ENCODE measurements at regions of chr6 and their contacts with region 1.

Region 1: DNA sequence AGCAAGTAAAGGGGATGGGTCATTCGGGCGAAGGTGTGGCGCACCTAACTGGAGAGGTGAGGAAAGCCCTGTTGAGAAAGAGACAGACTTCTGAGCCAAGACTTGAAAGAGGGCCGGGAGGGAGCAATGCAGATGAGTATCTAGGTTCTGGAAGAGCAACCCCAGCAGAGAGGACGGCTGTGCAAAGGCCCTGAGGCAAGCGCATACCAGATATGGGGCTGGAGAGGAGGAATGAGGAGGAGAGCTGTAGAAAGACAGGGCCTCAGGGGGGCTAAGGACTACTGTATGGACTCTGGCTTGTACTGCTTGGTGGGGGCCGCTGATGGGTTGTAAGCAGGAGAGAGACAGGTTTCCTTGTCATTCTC is 21.9 kb downstream of the TRERF1 start:
- DNase-seq: no peak

Region 2: GRCh38 chr6:42104095-42104806 is 325.6 kb before region 1 on chr6:
- intact Hi-C with region 1: no loop called
- DNase-seq: peak; percentile 91

Region 3: GRCh38 chr6:42387336-42387735 is 42.5 kb before region 1 on chr6:
- intact Hi-C with region 1: no loop called
- DNase-seq: no peak

Region 4: DNA sequence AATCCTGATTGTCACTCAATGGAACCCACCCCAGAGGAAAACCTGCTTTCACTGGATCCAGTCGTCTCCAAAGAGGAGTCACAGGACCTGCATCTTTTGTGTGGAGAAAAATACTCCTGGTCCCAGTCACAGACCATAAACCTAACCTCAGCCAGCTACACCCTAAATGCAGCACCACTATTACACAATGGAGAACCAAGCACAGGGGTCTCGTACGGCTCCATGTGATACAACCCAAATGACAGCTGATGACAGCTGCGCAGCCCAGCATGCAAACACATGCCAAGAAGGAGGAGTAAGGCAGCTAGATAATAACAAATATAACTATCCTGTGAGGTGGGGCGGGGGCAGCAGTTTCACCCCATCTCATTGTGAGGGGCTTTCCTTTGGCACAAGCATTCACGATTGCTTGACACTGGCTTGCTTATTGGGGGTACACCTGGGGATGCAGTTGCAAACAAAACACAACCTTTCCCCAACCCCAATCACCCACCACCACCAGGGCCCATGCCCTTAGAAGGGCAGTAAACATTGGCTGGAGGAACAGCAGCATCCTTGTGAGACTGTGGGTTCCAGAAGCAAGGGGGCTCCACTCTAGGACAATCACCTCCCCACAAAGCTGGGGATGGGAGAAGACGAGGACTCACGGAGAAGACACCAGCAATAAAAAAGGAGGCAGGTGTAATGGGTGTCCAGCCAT is 29.6 kb before region 1 on chr6:
- intact Hi-C with region 1: loop called in 1 of 2 experiments (anchors 1 kb)
- DNase-seq: no peak